Calu3 (cell line): ENCODE measurements at regions of chr4 and their contacts with region 1.

Region 1: DNA sequence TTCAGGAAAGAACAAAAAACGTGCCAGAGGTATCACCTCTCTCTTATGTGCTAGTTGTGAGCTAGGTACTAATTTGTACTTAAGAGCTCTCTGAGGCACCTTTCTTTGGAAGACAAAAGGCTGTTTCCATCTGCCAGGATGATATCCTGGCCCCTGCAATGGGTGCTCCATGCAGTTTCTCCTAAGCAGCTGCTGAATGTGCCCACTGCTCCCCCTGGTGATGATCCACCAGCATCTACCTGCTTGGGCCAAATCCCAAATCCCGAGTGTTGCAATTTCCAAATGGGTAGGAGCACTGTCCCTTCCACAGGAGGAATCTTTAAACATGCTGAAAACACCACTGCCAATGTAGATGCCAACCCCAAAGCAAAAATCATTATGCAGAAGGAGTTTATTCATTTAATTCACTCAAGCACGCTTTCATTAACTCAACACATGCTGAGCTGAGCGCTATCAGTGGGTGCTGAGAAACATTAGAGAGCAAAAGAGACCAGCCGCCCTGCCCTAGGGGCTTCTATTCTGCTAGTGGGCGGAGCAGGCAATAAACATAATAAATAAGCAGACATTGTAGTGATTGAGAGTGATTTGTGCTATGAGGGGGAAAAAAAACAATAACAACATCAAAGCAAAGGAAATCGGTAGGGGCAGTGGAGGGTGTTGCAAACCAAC is 69.6 kb upstream of the C4orf50 start:
- DNase-seq: peak; percentile 35
- H3K4me3 Mint-ChIP-seq: no peak overlapping the region
- H3K27ac Mint-ChIP-seq: no peak overlapping the region
- H3K4me1 Mint-ChIP-seq: no peaks in the 10 kb centered on the region
- H3K27me3 Mint-ChIP-seq: peaks cover 44% of the 10 kb centered on the region
- CTCF ChIP-seq: peak; percentile 26

Region 2: DNA sequence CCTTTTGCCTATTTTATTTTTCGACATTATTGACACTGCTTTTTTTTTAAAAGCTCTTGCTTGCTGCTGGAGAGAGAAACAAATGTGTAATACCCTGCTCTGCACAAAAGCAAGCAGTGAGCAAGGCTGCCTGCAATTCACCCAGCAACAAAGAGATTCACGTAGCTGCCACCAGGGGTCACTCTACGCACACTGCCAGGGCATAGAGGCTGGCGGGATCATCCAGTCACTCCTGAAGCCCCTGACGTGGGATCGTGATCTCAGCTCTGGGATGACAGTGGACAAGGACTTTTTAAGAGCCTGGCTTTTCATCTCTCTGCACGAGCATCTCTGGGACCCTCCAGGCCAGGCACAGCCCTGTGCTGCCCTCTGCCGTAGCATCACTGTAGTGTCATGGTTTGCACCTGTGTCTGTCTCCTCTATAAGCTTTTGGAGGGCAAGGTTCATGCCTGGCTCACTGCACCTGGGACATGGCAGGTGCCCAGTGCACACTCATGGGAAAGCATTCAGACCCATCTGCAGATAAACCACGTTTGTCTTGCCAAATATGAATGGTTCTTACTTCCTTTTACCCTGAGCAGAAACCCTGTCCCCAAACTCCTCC is 89.4 kb before region 1 on chr4:
- CTCF ChIA-PET with region 1: interaction called, 4 read pairs
- intact Hi-C with region 1: loop called (anchors 5 kb)
- DNase-seq: peak; percentile 53
- H3K4me3 Mint-ChIP-seq: no peak overlapping the region
- H3K27ac Mint-ChIP-seq: no peak overlapping the region
- H3K4me1 Mint-ChIP-seq: no peaks in the 10 kb centered on the region
- H3K27me3 Mint-ChIP-seq: peaks cover 18% of the 10 kb centered on the region
- CTCF ChIP-seq: peak; percentile 67

Region 3: DNA sequence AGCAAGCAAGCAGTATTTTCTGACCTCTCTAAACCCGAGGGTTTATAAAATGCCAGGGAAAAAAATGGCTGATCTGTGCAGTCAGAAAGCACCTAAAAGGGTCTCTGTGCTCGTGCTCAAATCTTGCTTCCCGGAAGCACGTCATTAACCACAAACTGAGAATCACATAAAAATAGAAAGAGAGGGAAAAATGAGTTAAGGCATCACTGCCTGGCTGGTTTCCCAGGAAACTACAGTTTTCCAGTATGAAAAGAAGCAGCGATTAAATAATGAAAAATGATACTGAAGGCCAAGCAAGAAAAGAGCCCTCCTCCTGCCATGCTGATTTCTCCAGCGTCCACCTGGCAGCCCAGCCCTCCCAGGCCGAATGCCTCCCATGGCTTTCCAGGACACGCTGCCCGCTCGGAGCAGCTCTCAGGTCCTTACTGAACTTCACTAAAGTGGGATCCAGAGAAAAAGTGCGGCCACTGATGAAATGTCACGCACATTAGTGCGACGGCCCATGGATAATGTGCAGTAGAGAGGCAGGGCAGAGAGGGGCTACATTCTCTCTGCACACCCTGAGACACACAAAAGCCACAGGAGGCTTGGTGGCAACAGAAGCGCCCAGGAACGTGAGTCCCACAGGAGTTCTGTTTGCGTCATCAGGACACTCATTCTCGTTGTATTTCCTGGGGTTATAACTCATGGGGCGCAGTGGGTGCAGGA is 262.2 kb after region 1 on chr4:
- CTCF ChIA-PET with region 1: no interaction called
- intact Hi-C with region 1: no loop called
- DNase-seq: no peak
- H3K4me3 Mint-ChIP-seq: no peak overlapping the region
- H3K27ac Mint-ChIP-seq: no peak overlapping the region
- H3K4me1 Mint-ChIP-seq: no peaks in the 10 kb centered on the region
- H3K27me3 Mint-ChIP-seq: no peaks in the 10 kb centered on the region
- CTCF ChIP-seq: no peak